WTC11 (cell line): ENCODE measurements at regions of chr19 and their contacts with region 1.

Region 1: DNA sequence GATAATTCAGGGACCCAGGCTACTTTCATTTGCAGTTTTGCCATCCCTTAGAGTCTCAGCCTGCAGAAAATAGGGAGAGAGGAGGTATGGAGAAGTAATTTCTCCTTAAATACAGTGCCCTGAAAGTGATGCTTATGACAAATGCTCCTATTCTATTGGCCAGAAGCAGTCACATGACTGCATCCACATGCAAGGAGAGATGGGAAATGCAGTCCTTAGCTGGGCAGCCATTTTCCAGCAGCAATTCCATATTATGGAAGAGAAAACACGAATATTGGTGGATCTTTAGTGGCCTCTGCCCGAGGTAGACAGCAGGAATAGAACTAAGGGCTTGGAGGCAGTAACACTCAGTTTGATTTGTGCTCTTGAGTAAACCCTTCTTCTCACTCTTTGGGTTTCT is 39.4 kb downstream of the VAV1 start:
- DNase-seq: no peak
- ATAC-seq: no peak
- H3K4me3 Mint-ChIP-seq: no peak overlapping the region
- H3K27ac Mint-ChIP-seq: no peak overlapping the region
- H3K4me1 Mint-ChIP-seq: no peaks in the 10 kb centered on the region
- H3K27me3 Mint-ChIP-seq: peaks cover 5% of the 10 kb centered on the region
- CTCF ChIP-seq: no peak

Region 2: GRCh38 chr19:6572217-6572616 is 239.7 kb before region 1 on chr19:
- CTCF ChIA-PET with region 1: no interaction called
- POLR2A ChIA-PET with region 1: no interaction called
- DNase-seq: no peak
- ATAC-seq: no peak
- H3K4me3 Mint-ChIP-seq: no peak overlapping the region
- H3K27ac Mint-ChIP-seq: no peak overlapping the region
- H3K4me1 Mint-ChIP-seq: peaks cover 7% of the 10 kb centered on the region; the same call in 1 of the 2 replicates
- H3K27me3 Mint-ChIP-seq: peaks cover 12% of the 10 kb centered on the region
- CTCF ChIP-seq: no peak

Region 3: DNA sequence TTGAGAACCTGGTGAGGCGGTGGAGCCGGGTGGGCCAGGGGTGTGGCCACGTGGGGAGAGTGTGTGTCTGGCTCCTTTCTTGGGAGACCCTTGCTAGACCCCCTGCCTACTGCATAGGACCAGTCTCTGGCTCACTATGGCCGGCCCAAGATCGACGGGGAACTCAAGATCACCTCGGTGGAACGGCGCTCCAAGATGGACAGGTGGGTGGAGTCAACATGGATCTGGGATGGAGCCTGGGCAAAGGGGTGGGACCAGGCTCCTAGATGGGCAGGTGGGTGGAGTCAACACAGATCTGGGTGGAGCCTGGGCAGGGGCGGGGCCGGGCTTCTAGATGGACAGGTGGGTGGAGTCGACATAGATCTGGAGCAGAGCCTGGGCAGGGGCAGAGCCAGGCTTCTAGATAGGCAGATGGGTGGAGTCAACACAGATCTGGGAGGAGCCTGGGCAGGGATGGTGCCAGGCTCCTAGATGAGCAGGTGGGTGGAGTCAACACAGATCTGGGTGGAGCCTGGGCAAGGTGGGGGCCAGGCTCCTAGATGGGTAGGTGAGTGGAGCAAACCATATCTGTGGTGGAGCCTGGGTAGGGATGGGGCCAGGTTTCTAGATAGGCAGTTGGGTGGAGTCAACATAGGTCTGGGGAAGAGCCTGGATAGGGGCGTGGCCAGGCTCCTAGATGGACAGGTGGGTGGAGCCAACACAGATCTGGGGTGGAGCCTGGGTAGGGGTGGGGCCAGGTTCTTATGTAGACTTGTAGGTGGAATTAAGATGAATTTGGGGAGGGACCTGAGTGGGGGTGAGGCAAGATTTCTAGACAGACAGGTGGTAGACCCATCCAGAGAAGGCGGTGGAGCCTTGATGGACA is 17.0 kb after region 1 on chr19:
- CTCF ChIA-PET with region 1: no interaction called
- POLR2A ChIA-PET with region 1: no interaction called
- DNase-seq: peak; percentile 36
- ATAC-seq: peak; percentile 64
- H3K4me3 Mint-ChIP-seq: no peak overlapping the region
- H3K27ac Mint-ChIP-seq: no peak overlapping the region
- H3K4me1 Mint-ChIP-seq: no peaks in the 10 kb centered on the region
- H3K27me3 Mint-ChIP-seq: peaks cover 23% of the 10 kb centered on the region
- CTCF ChIP-seq: no peak

Region 4: GRCh38 chr19:6970443-6970842 is 158.5 kb after region 1 on chr19:
- CTCF ChIA-PET with region 1: no interaction called
- POLR2A ChIA-PET with region 1: no interaction called
- DNase-seq: no peak
- ATAC-seq: no peak
- H3K4me3 Mint-ChIP-seq: no peak overlapping the region
- H3K27ac Mint-ChIP-seq: no peak overlapping the region
- H3K4me1 Mint-ChIP-seq: no peaks in the 10 kb centered on the region
- H3K27me3 Mint-ChIP-seq: peaks cover 18% of the 10 kb centered on the region
- CTCF ChIP-seq: no peak

Region 5: DNA sequence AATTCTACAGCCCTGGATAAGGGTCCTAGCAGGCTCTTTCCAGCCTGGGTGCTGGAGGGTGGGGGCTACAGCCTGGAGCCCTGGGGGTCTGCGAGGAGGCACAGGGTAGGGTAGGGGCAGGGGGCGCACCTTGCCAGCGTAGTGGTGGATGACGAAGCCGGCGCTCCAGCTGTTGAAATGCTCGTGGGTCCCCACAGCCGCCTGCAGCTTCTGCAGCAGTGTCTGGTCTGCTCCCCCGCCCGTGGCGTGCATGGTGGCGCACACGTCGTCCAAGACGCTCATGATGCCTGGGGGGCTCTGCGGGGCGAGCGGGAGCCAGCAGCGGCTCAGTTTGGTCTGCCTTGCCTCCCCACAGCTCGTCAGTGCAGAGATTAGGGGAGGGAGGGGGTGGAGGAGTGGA is 1732.3 kb after region 1 on chr19:
- CTCF ChIA-PET with region 1: no interaction called
- POLR2A ChIA-PET with region 1: interaction called, 10 read pairs
- DNase-seq: no peak
- ATAC-seq: no peak
- H3K4me3 Mint-ChIP-seq: no peak overlapping the region
- H3K27ac Mint-ChIP-seq: no peak overlapping the region
- H3K4me1 Mint-ChIP-seq: no peaks in the 10 kb centered on the region
- H3K27me3 Mint-ChIP-seq: no peaks in the 10 kb centered on the region
- CTCF ChIP-seq: no peak